Activated naive CD4-positive, alpha-beta T cell treated with anti-CD3 and anti-CD28 coated beads for 36 hours (primary cell): ENCODE measurements at regions of chr12 and their contacts with region 1.

Region 1: DNA sequence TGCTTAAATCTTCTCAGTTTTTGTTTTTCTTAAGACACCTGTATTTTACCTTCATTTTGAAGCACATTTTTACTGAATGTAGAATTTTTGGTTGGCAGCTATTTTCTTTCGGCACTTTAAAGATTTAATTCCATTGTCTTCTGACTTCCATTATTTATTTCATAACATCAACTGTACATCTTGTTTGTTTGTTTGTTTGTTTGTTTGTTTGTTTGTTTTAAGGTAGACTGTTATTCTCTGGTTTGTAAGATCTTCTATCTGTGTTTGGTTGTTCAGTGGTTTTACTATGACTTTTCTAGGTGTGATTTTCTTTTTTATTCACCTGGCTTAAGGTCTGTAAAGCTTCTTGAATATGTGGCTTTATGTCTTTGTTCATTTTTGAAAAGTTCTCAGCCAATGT is 61.9 kb downstream of the IFT81 start:
- DNase-seq: no peak
- H3K4me3 Mint-ChIP-seq: no peak overlapping the region
- H3K27ac Mint-ChIP-seq: no peak overlapping the region
- H3K4me1 Mint-ChIP-seq: no peaks in the 10 kb centered on the region
- H3K27me3 Mint-ChIP-seq: no peaks in the 10 kb centered on the region

Region 2: GRCh38 chr12:110149086-110149660 is 36.9 kb before region 1 on chr12:
- CTCF ChIA-PET with region 1: interaction called, 3 read pairs
- intact Hi-C with region 1: loop called (anchors 5 kb)
- DNase-seq: no peak
- H3K4me3 Mint-ChIP-seq: no peak overlapping the region
- H3K27ac Mint-ChIP-seq: no peak overlapping the region
- H3K4me1 Mint-ChIP-seq: peaks cover 6% of the 10 kb centered on the region
- H3K27me3 Mint-ChIP-seq: no peaks in the 10 kb centered on the region

Region 3: DNA sequence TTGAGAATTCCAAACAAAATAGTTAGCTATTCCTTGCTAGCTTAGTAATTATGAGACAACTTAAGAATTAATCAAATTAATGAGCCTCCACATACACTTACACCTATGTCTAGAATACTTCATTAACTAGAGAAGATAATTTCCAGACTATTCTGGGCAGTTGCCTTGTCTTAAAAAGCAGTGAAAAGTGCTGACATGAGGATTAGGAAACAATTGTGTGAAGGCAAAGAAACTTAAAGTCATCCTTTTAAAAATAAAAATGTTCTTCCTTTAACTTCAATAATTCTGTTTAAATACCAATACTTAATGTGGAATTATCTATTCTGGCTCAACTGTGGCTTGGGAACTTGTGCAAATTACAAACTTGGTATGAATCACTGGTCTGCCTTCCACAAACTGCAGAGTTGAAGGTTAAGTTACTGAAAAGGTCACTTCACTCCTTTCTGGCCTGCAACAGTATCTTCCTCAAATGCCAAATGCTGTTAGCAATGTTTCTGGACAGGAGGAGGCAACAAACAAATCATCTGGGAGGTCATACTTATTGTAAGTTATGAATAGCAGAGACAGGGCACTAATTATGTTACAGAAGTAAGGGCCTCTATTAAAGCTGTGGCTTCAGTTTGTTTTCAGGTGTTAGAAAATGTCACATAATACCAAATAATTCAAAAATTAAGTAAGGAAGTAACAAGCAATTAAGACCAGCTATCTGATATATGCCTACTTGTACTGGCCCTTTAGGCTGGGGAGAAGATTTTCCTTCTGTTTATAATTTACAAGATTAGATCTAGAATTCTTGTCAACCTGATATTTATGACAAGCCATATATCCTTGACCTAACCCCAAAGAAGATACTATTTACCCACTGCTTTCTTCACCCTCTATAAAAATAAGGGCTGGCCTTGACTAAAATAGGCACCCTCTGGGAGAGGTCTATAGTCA is 377.9 kb after region 1 on chr12:
- CTCF ChIA-PET with region 1: no interaction called
- intact Hi-C with region 1: no loop called
- DNase-seq: no peak
- H3K4me3 Mint-ChIP-seq: no peak overlapping the region
- H3K27ac Mint-ChIP-seq: peak overlapping the region; percentile 95
- H3K4me1 Mint-ChIP-seq: peaks cover 82% of the 10 kb centered on the region
- H3K27me3 Mint-ChIP-seq: no peaks in the 10 kb centered on the region